Activated CD8-positive, alpha-beta T cell treated with anti-CD3 and anti-CD28 coated beads, Interleukin-2, amount 10 ng/mL, durations not matched to agents 7 days and 5 days (primary cell): ENCODE measurements at regions of chr5 and their contacts with region 1.

Region 1: DNA sequence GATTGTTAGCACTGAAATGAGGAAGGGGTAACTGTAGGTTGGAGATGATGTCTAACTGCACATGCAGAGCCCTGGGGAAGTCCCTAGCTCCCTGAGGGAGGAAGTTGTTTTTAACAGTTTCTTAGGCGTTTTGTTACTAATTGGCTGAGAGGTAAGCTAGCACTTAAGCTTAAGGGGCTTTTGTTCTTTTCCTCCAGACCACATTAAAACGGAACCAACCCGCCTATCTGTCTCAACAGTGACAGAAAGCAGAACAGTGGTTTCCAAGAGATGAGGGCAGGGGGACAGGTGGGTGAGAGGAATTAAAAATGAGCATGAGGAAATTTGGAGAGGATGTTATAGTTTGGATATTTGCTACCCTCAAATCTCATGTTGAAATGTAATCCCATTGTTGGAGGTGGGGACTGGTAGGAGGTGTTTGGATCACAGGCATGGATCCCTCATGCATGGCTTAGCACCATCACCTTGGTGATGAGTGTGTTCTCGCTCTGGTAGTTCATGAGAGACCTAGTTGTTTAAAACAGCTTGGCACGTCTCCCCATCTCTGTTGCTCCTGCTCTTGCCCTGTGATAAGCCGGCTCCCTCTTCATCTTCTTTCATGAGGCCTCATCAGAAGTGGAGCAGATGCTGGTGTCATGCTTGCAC is 38.9 kb downstream of the LYRM7 start:
- DNase-seq: peak; percentile 62
- ATAC-seq: peak; percentile 94
- H3K4me3 Mint-ChIP-seq: peak overlapping the region; percentile 75
- H3K27ac Mint-ChIP-seq: peak overlapping the region; percentile 97
- H3K4me1 Mint-ChIP-seq: peaks cover 56% of the 10 kb centered on the region
- H3K27me3 Mint-ChIP-seq: no peaks in the 10 kb centered on the region

Region 2: DNA sequence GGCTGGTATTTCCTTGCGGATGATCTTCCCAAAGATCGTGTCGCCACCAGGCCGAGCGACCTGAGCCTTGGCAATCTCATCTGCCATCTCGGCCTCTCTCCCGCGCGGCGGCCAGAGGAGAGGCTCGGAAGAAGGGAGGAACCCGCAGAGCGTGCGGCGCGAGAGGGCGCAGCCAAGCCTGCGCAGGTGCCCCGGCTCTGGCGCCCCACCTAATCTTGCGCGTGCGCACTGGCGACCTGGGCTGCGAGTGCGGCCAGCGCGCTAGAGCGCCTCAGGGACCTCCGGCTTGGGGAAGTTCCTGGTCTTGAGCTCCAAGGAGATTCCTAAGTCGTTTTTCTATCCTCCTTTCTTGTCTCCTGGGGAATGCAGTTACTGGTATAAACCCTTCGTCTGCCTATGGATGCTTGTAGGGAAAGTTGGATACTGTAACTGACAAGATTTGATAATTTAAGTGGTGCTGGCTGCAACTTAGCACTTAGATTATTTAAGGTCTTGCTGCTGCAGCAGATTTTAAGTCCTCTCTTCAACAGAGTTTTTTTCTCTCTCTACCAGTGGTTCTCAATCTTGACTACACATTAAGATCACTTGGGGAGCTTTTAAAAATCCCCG is 44.4 kb before region 1 on chr5 and contains the start of gene HINT1:
- CTCF ChIA-PET with region 1: interaction called, 3 read pairs
- POLR2A ChIA-PET with region 1: interaction called, 13 read pairs
- DNase-seq: peak; percentile 94
- ATAC-seq: peak; percentile 90
- H3K4me3 Mint-ChIP-seq: peak within 1 kb of the TSS; percentile 96
- H3K27ac Mint-ChIP-seq: peak within 1 kb of the TSS; percentile 98
- H3K4me1 Mint-ChIP-seq: peaks cover 49% of the 10 kb centered on the region
- H3K27me3 Mint-ChIP-seq: no peaks in the 10 kb centered on the region
- total RNA-seq, gene HINT1: 232 to 246 TPM

Region 3: DNA sequence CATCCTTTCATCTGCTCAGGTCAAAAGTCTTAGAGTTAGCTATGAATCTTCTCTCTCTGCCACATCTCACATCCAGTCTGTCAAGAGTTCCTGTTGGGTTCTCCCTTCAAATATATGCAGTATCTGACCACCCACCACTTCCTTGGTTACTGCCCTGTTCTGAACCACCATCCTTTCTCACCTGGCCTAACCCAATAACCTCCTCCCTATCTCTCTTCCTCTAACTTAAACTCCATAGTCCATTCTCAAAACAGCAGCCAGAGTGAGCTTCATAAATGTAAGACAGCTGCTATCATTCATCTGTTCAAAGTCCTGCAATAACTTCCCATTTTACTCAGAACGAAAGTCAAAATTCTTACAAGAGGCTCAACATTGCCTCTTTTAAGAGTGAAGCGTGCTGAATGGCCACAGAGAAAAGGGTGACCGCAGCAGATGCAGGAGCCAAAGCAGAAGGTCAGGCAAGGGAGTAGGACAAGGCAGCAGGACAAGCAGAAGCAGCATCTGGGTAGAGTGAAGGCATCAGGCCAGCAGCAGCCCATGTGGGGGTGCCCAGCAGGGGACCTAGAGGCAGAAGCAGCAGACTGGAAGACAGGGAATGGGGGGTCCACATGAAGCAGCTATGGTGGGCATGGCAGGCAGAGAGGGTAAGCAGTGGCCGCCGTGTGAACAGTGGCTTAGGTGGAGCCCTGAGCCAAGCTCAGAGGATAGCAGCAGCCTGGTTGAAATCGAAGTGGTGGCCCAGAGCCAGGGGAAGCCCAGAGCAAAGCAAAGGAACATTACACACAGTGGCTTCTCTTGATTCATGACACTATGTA is 15.0 kb after region 1 on chr5:
- CTCF ChIA-PET with region 1: interaction called, 11 read pairs
- POLR2A ChIA-PET with region 1: interaction called, 10 read pairs
- DNase-seq: peak; percentile 60
- ATAC-seq: peak; percentile 83
- H3K4me3 Mint-ChIP-seq: no peak overlapping the region
- H3K27ac Mint-ChIP-seq: no peak overlapping the region
- H3K4me1 Mint-ChIP-seq: peaks cover 14% of the 10 kb centered on the region
- H3K27me3 Mint-ChIP-seq: no peaks in the 10 kb centered on the region

Region 4: GRCh38 chr5:131252824-131253171 is 43.2 kb after region 1 on chr5:
- CTCF ChIA-PET with region 1: interaction called, 7 read pairs
- POLR2A ChIA-PET with region 1: interaction called, 22 read pairs
- DNase-seq: peak; percentile 91
- ATAC-seq: peak; percentile 84
- H3K4me3 Mint-ChIP-seq: peak overlapping the region; percentile 92
- H3K27ac Mint-ChIP-seq: peak overlapping the region; percentile 93
- H3K4me1 Mint-ChIP-seq: peaks cover 77% of the 10 kb centered on the region
- H3K27me3 Mint-ChIP-seq: no peaks in the 10 kb centered on the region